Heart left ventricle (tissue), 16 donors: ENCODE measurements at regions of chr1 and their contacts with region 1.

Region 1: GRCh38 chr1:109790735-109791494 is 27.2 kb upstream of the EPS8L3 start:
- DNase-seq: peak; percentile 66 to 84 (median 68)
- ATAC-seq: peak; percentile 55 to 72 (median 67)
- H3K4me3 ChIP-seq: no peak overlapping the region
- H3K27ac ChIP-seq: peak overlapping the region in 10 of 12 donors; percentile 13 to 83 (median 40)
- H3K4me1 ChIP-seq: peaks cover 6 to 69% (median 48%) of the 10 kb centered on the region in 12 donors
- H3K27me3 ChIP-seq: no peaks in the 10 kb centered on the region
- CTCF ChIP-seq: peak; percentile 32 to 70 (median 50)
- POLR2A ChIP-seq: no peak

Region 2: GRCh38 chr1:109739738-109740660 is 50.9 kb before region 1 on chr1:
- intact Hi-C with region 1: no loop called
- DNase-seq: peak; percentile 77 to 92 (median 80)
- ATAC-seq: peak; percentile 94 to 99 (median 98)
- H3K4me3 ChIP-seq: peak overlapping the region; percentile 28 to 88 (median 66)
- H3K27ac ChIP-seq: peak overlapping the region in 11 of 12 donors; percentile 5 to 84 (median 64)
- H3K4me1 ChIP-seq: peaks cover 0 to 17% (median 12%) of the 10 kb centered on the region in 12 donors
- H3K27me3 ChIP-seq: peaks cover 0 to 10% (median 0%) of the 10 kb centered on the region in 9 donors
- CTCF ChIP-seq: no peak
- POLR2A ChIP-seq: peak; percentile 59 to 83

Region 3: DNA sequence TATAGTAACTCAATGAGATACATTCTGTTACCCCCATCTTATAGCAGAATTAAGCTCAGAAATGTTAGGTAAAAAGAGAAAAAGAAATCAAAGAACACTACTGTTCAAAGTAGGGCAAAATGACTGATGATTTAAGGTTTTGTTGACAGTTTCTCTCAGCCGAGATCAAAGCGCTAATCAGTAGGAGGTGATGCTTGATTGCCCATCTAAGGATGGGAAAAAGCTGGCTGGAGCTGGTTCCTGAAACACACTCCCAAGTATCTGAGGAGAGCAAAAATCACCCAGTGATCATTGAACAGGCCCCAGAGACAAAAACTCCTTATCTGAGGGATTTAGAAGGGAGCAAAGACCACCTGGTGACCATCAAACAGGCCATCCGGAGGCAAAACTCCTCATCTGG is 55.2 kb after region 1 on chr1:
- intact Hi-C with region 1: loop called in 1 of 10 experiments (anchors 10 kb)
- DNase-seq: no peak
- ATAC-seq: no peak
- H3K4me3 ChIP-seq: no peak overlapping the region
- H3K27ac ChIP-seq: no peak overlapping the region
- H3K4me1 ChIP-seq: peaks cover 0 to 6% (median 0%) of the 10 kb centered on the region in 12 donors
- H3K27me3 ChIP-seq: no peaks in the 10 kb centered on the region
- CTCF ChIP-seq: no peak
- POLR2A ChIP-seq: no peak

Region 4: DNA sequence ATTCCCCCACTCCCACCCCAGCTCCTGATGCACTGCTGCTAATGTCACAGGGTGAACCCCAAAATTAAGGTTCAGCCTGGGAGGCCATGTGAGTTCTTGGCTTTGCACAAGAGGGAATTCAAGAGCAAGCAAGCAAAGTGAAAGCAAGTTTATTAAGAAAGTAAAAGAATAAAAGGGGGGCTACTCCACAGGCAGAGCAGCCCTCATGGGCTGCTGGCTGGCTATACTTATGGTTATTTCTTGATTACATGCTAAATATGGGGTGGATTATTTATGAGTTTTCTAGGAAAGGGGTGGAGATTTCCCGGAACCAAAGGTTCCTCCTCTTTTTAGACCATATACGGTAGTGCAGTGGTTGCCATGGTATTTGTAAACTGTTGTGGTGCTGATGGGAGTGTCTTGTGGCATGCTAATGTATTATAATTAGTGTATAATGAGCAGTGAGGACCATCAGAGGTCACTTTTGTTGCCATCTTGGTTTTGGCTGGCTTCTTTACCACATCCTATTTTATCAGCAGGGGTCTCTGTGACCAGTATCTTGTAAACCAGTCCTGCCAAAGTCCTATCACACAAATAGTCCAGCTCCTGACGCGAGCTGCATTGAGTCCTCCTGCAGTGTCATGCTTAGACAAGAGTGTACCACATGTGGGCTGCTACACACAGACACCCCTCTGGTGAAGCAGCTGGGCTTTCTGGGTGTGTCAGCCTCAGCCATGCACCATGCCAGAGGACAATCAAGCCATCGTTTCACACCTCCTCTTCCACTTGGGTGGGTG is 73.3 kb after region 1 on chr1:
- intact Hi-C with region 1: no loop called
- DNase-seq: no peak
- ATAC-seq: peak in 2 of 4 donors; percentile 18 to 50
- H3K4me3 ChIP-seq: no peak overlapping the region
- H3K27ac ChIP-seq: peak overlapping the region in 4 of 12 donors; percentile 30 to 60 (median 48)
- H3K4me1 ChIP-seq: peaks cover 0 to 18% (median 9%) of the 10 kb centered on the region in 12 donors
- H3K27me3 ChIP-seq: no peaks in the 10 kb centered on the region
- CTCF ChIP-seq: no peak
- POLR2A ChIP-seq: no peak

Region 5: DNA sequence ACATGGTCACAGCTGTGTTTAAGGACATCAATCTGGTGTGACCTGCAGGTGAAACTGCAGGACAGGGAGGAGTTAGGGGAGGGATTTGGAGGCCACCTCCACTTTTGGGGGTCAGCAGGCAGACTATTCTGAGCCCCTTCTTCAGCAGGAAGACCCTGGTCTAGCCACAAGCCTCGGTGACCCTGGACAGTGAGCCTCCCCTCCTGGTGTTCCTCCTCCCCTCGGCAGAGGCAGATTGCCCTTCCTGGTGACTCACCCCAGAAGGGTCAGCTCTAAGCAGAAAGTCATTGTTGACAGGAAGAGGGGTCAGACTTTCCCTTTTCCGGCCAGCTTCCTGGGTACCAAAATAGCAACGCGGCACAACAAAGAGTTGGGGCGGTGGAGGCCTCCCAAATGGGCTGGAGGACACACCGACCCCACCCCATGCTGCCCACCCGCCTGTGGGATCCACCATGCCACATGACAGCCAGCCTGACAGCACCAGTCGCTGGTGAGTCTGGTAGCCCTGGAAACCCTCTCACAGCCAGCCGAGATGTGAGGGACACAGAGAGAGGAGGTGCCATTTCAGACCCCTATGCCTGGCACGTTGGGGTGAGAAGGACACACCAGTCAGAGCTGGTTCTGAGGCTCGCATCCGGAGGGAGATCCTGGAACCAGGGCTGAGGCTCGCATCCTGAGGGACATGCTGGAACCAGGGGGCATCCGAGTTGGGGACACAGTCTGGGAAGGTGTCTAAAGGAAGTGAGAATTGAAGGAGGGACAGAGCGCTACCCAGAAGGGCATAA is 105.0 kb after region 1 on chr1:
- intact Hi-C with region 1: loop called in 1 of 10 experiments (anchors 5 kb)
- DNase-seq: peak; percentile 63 to 81 (median 77)
- ATAC-seq: peak; percentile 44 to 84 (median 76)
- H3K4me3 ChIP-seq: peak overlapping the region in 1 of 12 donors; percentile 18
- H3K27ac ChIP-seq: peak overlapping the region; percentile 12 to 83 (median 68)
- H3K4me1 ChIP-seq: peaks cover 0 to 79% (median 52%) of the 10 kb centered on the region in 12 donors
- H3K27me3 ChIP-seq: no peaks in the 10 kb centered on the region
- CTCF ChIP-seq: no peak
- POLR2A ChIP-seq: no peak

Region 6: GRCh38 chr1:109910123-109910962 is 119.4 kb after region 1 on chr1 and contains the start of gene CSF1:
- intact Hi-C with region 1: loop called in 9 of 10 experiments (anchors 2 to 10 kb)
- DNase-seq: peak; percentile 82 to 88 (median 86)
- ATAC-seq: peak; percentile 66 to 84 (median 74)
- H3K4me3 ChIP-seq: peak within 1 kb of the TSS; percentile 71 to 97 (median 88)
- H3K27ac ChIP-seq: peak within 1 kb of the TSS; percentile 59 to 93 (median 88)
- H3K4me1 ChIP-seq: peaks cover 4 to 66% (median 47%) of the 10 kb centered on the region in 12 donors
- H3K27me3 ChIP-seq: peaks cover 0 to 9% (median 0%) of the 10 kb centered on the region in 9 donors
- CTCF ChIP-seq: peak in 1 of 12 donors; percentile 21
- POLR2A ChIP-seq: peak in 1 of 2 donors; percentile 57
- total RNA-seq, gene CSF1: 9.0 to 64.8 (median 14.5) TPM

Region 7: GRCh38 chr1:109917768-109918606 is 127.1 kb after region 1 on chr1:
- intact Hi-C with region 1: loop called in 6 of 10 experiments (anchors 5 to 10 kb)
- DNase-seq: no peak
- ATAC-seq: no peak
- H3K4me3 ChIP-seq: no peak overlapping the region
- H3K27ac ChIP-seq: peak overlapping the region in 1 of 12 donors; percentile 24
- H3K4me1 ChIP-seq: peaks cover 0 to 38% (median 22%) of the 10 kb centered on the region in 12 donors
- H3K27me3 ChIP-seq: no peaks in the 10 kb centered on the region
- CTCF ChIP-seq: no peak
- POLR2A ChIP-seq: no peak

Region 8: GRCh38 chr1:109979489-109980091 is 188.7 kb after region 1 on chr1:
- intact Hi-C with region 1: loop called in 6 of 10 experiments (anchors 1 to 5 kb)
- DNase-seq: no peak
- ATAC-seq: no peak
- H3K4me3 ChIP-seq: no peak overlapping the region
- H3K27ac ChIP-seq: no peak overlapping the region
- H3K4me1 ChIP-seq: peaks cover 0 to 52% (median 27%) of the 10 kb centered on the region in 12 donors
- H3K27me3 ChIP-seq: no peaks in the 10 kb centered on the region
- CTCF ChIP-seq: no peak
- POLR2A ChIP-seq: no peak

Region 9: GRCh38 chr1:109984456-109985275 is 193.8 kb after region 1 on chr1 and contains the start of gene AHCYL1:
- intact Hi-C with region 1: loop called in 6 of 10 experiments (anchors 1 to 5 kb)
- DNase-seq: peak; percentile 100
- ATAC-seq: peak; percentile 96 to 98 (median 98)
- H3K4me3 ChIP-seq: peak within 1 kb of the TSS; percentile 61 to 97 (median 93)
- H3K27ac ChIP-seq: peak within 1 kb of the TSS; percentile 90 to 99 (median 98)
- H3K4me1 ChIP-seq: peaks cover 9 to 64% (median 55%) of the 10 kb centered on the region in 12 donors
- H3K27me3 ChIP-seq: no peaks in the 10 kb centered on the region
- CTCF ChIP-seq: peak; percentile 96 to 100 (median 98)
- POLR2A ChIP-seq: peak; percentile 95 to 98
- total RNA-seq, gene AHCYL1: 31.1 to 56.7 (median 48.7) TPM

Region 10: DNA sequence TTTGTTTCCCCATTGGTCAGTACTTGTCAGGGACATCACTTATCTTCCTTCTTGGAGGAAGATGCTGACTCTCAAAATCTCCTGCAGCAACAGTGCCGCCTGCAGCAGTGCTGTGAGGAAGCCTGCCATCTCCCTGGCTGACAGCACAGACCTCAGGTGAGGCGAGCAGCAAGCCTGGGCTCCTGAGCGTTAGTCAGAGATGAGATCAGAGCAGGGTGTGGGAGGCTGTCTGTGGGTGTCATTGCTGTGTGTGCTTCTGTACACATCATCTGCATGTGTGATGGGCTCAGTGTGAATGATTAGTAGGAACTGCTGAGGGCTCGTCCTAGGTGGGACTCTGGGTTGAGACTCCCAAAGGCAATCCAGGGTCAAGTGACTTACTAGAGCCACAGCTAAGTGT is 249.6 kb after region 1 on chr1:
- intact Hi-C with region 1: no loop called
- DNase-seq: no peak
- ATAC-seq: no peak
- H3K4me3 ChIP-seq: no peak overlapping the region
- H3K27ac ChIP-seq: no peak overlapping the region
- H3K4me1 ChIP-seq: peaks cover 2 to 17% (median 9%) of the 10 kb centered on the region in 12 donors
- H3K27me3 ChIP-seq: no peaks in the 10 kb centered on the region
- CTCF ChIP-seq: no peak
- POLR2A ChIP-seq: no peak